Posterior vena cava (tissue), 2 donors: ENCODE measurements at regions of chr5 and their contacts with region 1.

Region 1: DNA sequence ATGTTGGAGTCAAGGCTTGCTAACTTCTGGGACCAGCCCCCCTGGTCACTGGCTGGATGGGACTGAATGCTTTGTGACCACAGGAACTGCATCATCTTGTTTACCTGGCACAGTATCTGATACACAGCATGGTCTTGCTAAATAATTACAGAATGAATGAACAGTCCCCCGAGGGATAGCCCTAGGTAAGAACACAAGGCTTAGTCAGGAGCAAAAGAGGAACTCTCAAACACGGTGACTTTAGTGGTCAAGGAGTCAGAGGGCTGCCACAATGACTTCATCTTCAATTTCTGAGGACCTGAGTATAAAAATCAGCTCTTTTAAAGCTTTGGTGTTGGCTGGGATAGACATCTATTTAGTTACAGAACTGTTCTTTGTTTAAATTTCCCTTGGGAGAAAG is 15.1 kb upstream of the CXCL14 start:
- DNase-seq: no peak

Region 2: DNA sequence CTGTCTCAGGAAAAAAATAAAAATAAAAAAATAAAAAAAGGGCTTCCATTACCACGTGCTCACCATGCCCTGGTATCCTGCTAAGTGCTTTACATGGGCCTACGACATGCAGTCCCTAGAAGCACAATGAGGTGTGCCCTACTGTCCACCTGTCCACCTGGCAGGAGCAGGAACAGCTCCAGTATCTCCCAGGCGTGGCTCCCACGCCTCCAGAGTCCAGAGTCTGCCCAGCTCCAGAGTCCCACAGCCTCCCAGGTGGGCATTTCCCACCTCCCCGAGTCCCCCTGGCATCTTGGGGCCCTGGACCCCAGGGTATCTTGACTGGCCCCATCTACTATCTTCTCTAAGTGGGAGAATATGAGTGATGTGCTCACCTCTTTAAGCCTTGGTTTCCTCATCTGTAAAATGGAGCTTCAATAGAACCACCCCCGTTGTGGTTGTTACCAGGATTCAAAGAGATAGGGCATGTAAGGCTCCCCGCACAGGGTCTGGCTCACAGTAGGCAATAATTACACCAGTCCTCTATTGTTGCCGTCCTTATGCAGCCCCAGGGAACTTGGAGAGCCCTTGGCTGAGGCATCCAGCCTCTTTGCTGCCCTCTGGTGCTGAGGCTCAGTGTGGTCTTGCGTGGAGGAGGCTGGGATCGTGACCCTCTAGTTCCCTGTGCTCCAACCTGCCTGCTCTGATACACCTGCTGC is 24.0 kb before region 1 on chr5:
- intact Hi-C with region 1: no loop called
- DNase-seq: peak; percentile 56

Region 3: GRCh38 chr5:135582099-135582781 is 11.6 kb before region 1 on chr5:
- intact Hi-C with region 1: no loop called
- DNase-seq: peak; percentile 25

Region 4: GRCh38 chr5:135615581-135616260 is 21.8 kb after region 1 on chr5:
- intact Hi-C with region 1: no loop called
- DNase-seq: no peak

Region 5: GRCh38 chr5:135625961-135626360 is 32.1 kb after region 1 on chr5:
- intact Hi-C with region 1: loop called in 1 of 2 experiments (anchors 1 kb)
- DNase-seq: no peak